ENCODE measurements at regions of chr11 and their contacts with region 1.

Region 1: GRCh38 chr11:57800444-57801182 is 39.0 kb downstream of the CTNND1 start:
- DNase-seq: no peak
- ATAC-seq: peak; percentile 78
- H3K4me3 ChIP-seq: no peak overlapping the region
- H3K4me1 ChIP-seq: peaks cover 34% of the 10 kb centered on the region
- CTCF ChIP-seq: peak; percentile 74

Region 2: GRCh38 chr11:57741132-57742086 is 59.2 kb before region 1 on chr11 and contains the start of gene SELENOH:
- intact Hi-C with region 1: loop called in 1 of 2 experiments (anchors 5 kb)
- DNase-seq: peak; percentile 95 to 98 (median 97)
- ATAC-seq: peak; percentile 98
- H3K4me3 ChIP-seq: peak within 1 kb of the TSS; percentile 64
- H3K4me1 ChIP-seq: peaks cover 11% of the 10 kb centered on the region
- CTCF ChIP-seq: no peak
- total RNA-seq, gene SELENOH: 68.3 to 84.0 (median 79.2) TPM

Region 3: GRCh38 chr11:57761301-57762234 is 39.0 kb before region 1 on chr11 and contains the start of gene CTNND1:
- intact Hi-C with region 1: loop called in 1 of 2 experiments (anchors 5 kb)
- DNase-seq: peak; percentile 81 to 92 (median 84)
- ATAC-seq: peak; percentile 95
- H3K4me3 ChIP-seq: peak within 1 kb of the TSS; percentile 31
- H3K4me1 ChIP-seq: peaks cover 15% of the 10 kb centered on the region
- CTCF ChIP-seq: no peak
- total RNA-seq, gene CTNND1: 311 to 545 (median 448) TPM

Region 4: DNA sequence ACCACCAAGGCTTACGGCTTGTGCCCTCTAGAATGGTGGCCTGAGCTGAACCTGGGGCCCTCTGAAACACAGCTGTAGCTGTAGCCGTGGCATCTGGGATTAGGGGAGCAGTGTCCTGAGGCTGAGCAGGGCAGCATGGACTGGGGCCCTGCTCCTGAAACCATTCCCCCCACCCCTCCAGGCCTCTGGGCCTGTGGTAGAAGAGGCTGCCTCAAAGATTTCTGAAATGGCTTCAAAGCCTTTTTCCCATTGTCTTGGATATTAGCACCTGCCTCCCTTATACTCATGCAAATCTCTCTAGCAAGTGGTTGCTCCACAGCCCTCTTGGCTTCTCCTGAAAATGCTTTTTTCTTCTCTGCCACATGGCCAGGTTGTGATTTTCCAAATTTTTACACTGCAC is 67.9 kb after region 1 on chr11:
- intact Hi-C with region 1: no loop called
- DNase-seq: no peak
- ATAC-seq: no peak
- H3K4me3 ChIP-seq: no peak overlapping the region
- H3K4me1 ChIP-seq: no peaks in the 10 kb centered on the region
- CTCF ChIP-seq: no peak